AG04450 (cell line): ENCODE measurements at regions of chr3 and their contacts with region 1.

Region 1: GRCh38 chr3:81743096-81744025 is 18.1 kb downstream of the GBE1 start:
- DNase-seq: peak; percentile 91
- H3K4me3 ChIP-seq: no peak overlapping the region
- H3K27ac ChIP-seq: peak overlapping the region; percentile 93
- H3K27me3 ChIP-seq: no peaks in the 10 kb centered on the region
- CTCF ChIP-seq: no peak

Region 2: DNA sequence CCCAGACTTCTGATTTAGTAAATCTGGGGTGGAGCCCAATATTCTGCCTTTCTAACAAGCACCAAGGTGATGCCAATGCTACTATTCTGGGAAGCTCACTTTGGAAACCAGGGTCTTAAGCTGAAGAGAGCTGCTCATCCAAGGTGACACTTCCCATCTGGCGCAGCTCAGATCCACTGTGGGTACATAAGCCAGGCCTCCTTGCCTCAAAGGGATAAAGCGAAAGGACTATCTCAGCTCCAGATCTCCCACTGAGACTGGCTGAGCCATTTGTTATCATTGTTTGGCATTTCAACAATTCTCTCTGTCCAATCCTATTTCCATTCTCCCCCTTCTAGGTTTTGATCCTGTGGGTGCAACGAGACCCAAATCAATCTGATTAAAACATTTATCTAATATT is 305.7 kb before region 1 on chr3:
- CTCF ChIA-PET with region 1: no interaction called
- POLR2A ChIA-PET with region 1: no interaction called
- DNase-seq: no peak
- H3K4me3 ChIP-seq: no peak overlapping the region
- H3K27ac ChIP-seq: no peak overlapping the region
- H3K27me3 ChIP-seq: no peaks in the 10 kb centered on the region
- CTCF ChIP-seq: no peak

Region 3: DNA sequence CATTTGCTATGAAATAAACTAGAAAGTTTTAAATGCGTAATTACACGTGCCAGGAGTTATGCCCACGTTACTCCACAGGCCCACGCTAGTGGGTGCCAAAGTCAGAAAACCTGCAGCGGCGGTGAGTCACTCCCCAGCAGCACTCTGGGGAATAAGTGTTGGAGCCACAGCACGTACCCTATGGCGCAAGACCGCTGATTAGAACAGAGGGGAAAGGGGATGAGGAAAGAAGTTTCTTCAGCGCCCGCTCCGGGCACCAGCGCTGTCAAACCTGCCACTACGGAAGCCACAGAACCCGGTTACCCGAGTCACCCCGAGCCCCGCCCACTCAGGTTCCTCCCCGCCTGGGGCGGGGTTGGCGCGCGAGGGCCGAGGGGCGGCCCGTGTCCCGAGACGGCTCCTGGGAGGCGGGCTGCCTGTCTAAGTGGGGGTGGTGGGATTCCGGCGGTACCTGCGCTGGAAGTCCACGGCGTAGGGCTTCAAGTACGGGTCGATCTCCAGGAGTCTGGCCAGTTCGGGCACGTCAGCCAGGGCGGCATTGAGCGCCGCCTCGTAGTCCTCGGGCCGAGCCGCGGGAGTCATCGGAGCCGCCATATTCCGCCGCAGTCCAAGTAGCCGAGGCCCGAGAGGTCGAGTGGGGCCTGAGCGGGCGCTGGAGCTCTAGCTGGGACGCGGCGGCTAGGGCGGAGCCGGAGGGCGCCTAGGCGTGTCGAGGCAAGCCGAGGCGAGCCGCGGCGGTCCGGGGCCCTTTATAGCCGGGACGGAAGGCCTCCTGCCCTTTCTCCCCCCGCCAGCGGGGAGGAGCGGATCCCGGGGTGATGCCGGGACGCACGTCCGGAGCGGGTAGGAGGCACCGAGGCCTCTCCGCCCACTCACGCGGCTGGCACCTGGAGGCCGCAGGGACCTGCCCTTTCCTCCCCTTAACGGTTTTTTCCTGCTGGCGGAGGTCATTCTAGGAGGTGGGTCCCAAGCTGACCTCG is 17.9 kb after region 1 on chr3 and contains the start of gene GBE1:
- CTCF ChIA-PET with region 1: interaction called, 5 read pairs
- POLR2A ChIA-PET with region 1: interaction called, 12 read pairs
- DNase-seq: peak; percentile 77
- H3K4me3 ChIP-seq: peak within 1 kb of the TSS; percentile 77
- H3K27ac ChIP-seq: peak within 1 kb of the TSS; percentile 99
- H3K27me3 ChIP-seq: no peaks in the 10 kb centered on the region
- CTCF ChIP-seq: peak; percentile 59
- polyA plus RNA-seq, gene GBE1: 44.5 and 60.1 TPM in 2 replicates

Region 4: GRCh38 chr3:82392203-82392775 is 648.9 kb after region 1 on chr3:
- CTCF ChIA-PET with region 1: no interaction called
- POLR2A ChIA-PET with region 1: no interaction called
- DNase-seq: no peak
- H3K4me3 ChIP-seq: no peak overlapping the region
- H3K27ac ChIP-seq: no peak overlapping the region
- H3K27me3 ChIP-seq: no peaks in the 10 kb centered on the region
- CTCF ChIP-seq: no peak